A549 (cell line): ENCODE measurements at regions of chr10 and their contacts with region 1.

Region 1: GRCh38 chr10:17847585-17848296 is 38.6 kb downstream of the MRC1 start:
- DNase-seq: no peak
- ATAC-seq: peak; percentile 64 to 70; a peak in 5 of 6 replicates
- H3K4me3 ChIP-seq: no peak overlapping the region
- H3K27ac ChIP-seq: no peak overlapping the region
- H3K4me1 ChIP-seq: no peaks in the 10 kb centered on the region
- CTCF ChIP-seq: peak; percentile 68
- EP300 ChIP-seq: no peak
- POLR2A ChIP-seq: no peak
- RAD21 ChIP-seq: peak; percentile 57 to 60

Region 2: DNA sequence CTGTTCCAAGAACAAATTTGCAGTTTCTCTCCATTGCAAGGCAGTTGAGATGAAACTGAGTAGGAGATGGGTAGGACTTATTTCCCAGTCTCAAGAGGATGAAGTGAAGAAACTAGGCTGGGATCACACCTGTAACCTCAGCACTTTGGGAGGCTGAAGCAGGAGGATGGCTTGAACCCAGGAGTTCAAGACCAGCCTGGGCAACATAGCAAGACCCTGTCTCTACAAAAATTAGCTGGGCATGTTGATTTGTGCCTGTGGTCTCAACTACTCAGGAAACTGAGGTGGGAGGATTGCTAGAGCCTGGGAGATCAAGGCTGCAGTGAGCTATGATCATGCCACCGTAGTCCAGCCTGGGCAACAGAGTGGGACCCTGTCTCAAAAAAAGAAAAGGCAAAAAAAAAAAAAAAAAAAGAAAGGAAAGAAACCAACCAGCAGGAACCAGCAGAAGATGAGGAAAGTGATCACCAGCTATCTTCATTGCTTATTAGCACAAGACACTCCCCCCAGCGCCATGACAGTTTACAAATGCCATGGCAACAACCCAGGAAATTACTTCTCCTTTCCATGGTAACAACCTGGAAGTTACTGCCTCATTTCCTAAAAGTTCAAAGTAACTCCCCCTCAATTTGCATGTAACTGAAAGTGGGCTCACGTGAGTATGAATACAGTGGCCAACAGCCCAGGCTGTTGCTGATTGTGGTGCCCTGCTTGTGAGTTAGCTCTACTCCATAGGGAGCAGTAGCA is 375.1 kb before region 1 on chr10:
- CTCF ChIA-PET with region 1: no interaction called
- POLR2A ChIA-PET with region 1: no interaction called
- DNase-seq: no peak
- ATAC-seq: no peak
- H3K4me3 ChIP-seq: no peak overlapping the region
- H3K27ac ChIP-seq: no peak overlapping the region
- H3K4me1 ChIP-seq: no peaks in the 10 kb centered on the region
- CTCF ChIP-seq: no peak
- EP300 ChIP-seq: no peak
- POLR2A ChIP-seq: no peak
- RAD21 ChIP-seq: no peak

Region 3: DNA sequence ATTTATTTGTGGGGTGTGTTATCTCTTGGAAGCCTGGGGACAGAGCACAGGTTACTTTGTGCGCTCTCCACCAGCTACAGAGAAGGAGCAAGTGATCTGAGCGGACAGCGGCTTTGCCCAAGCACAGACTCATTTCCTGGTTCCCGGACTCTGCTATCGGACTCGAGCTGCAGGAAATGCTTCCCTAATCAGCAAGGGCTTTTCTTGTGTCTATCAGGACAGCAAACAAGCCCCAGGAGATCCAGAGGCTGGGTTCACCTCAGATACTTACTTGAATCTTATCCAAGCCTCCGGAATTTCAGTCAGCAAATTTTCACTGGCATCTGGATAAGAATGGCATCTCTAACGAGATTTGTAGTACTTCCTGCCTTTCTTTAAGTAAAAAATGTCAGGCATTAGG is 10.8 kb before region 1 on chr10:
- CTCF ChIA-PET with region 1: interaction called, 33 read pairs
- POLR2A ChIA-PET with region 1: no interaction called
- DNase-seq: peak; percentile 25 to 64
- ATAC-seq: peak; percentile 54 to 85; a peak in 3 of 6 replicates
- H3K4me3 ChIP-seq: peak overlapping the region; percentile 22
- H3K27ac ChIP-seq: peak overlapping the region; percentile 68 to 86
- H3K4me1 ChIP-seq: peaks cover 19% of the 10 kb centered on the region
- CTCF ChIP-seq: no peak
- EP300 ChIP-seq: no peak
- POLR2A ChIP-seq: no peak
- RAD21 ChIP-seq: no peak

Region 4: DNA sequence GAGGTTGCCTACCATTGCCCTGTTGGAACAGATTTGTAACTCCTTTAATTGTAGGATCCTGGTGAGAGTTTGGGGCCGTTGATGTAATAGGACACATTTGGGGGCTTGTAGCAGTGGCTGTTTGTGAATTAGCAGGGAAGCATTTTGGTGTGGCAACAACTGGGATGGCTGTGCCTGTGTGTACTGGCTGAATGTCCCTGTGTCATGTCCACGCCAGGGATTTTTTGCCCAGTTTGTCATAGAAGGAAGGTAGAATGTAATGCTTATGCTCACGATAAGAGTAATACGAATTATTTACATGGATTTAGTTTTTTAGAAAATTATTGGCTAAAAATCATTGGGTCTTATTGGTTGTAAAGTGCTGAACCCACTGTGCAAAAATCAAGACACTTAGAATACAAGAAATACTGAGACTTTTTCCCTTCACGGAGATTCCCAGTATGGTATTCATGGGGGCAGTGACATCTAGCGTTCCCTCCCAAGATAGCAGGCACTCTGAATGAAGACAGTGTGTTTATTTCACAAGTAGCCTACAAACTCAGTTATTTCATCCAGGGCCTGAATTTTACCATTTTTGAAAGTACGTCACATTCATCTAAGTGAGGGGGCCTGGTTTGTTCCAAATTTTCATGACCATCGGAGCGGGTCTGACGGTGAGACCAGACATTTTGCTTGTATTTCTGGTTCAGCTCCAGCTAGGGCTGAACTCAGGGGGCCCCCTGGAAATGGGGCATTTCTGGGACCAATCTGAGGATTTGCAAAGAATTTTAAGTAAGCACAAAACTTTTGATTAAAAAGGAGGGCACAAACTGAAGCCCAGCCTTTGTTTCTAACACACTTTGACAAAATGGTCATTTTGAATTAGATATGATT is 367.2 kb after region 1 on chr10:
- CTCF ChIA-PET with region 1: interaction called, 40 read pairs
- POLR2A ChIA-PET with region 1: no interaction called
- DNase-seq: peak; percentile 48 to 51
- ATAC-seq: peak; percentile 84 to 87
- H3K4me3 ChIP-seq: no peak overlapping the region
- H3K27ac ChIP-seq: no peak overlapping the region
- H3K4me1 ChIP-seq: no peaks in the 10 kb centered on the region
- CTCF ChIP-seq: peak; percentile 80
- EP300 ChIP-seq: no peak
- POLR2A ChIP-seq: no peak
- RAD21 ChIP-seq: peak; percentile 71 to 72